Natural killer cell (primary cell): ENCODE measurements at regions of chr15 and their contacts with region 1.

Region 1: GRCh38 chr15:75842722-75843551 is at the start of gene UBE2Q2:
- DNase-seq: peak; percentile 67 to 83
- ATAC-seq: peak; percentile 69 to 81 (median 81)
- H3K4me3 ChIP-seq: peak within 1 kb of the TSS; percentile 73
- H3K4me3 Mint-ChIP-seq: peak within 1 kb of the TSS; percentile 96
- H3K27ac ChIP-seq: peak within 1 kb of the TSS; percentile 76
- H3K27ac Mint-ChIP-seq: peak within 1 kb of the TSS; percentile 74 to 88
- H3K4me1 ChIP-seq: peaks cover 29% of the 10 kb centered on the region
- H3K4me1 Mint-ChIP-seq: peaks cover 45 to 46% of the 10 kb centered on the region in 2 donors
- H3K27me3 ChIP-seq: no peaks in the 10 kb centered on the region
- H3K27me3 Mint-ChIP-seq: no peaks in the 10 kb centered on the region
- CTCF ChIP-seq: no peak
- total RNA-seq, gene UBE2Q2: 39.5 to 64.6 (median 63.9) TPM

Region 2: GRCh38 chr15:75732809-75733451 is 110.0 kb before region 1 on chr15:
- intact Hi-C with region 1: no loop called
- DNase-seq: peak; percentile 49 to 65
- ATAC-seq: peak; percentile 62 to 80 (median 80)
- H3K4me3 ChIP-seq: no peak overlapping the region
- H3K4me3 Mint-ChIP-seq: no peak overlapping the region
- H3K27ac ChIP-seq: no peak overlapping the region
- H3K27ac Mint-ChIP-seq: no peak overlapping the region
- H3K4me1 ChIP-seq: peaks cover 13% of the 10 kb centered on the region
- H3K4me1 Mint-ChIP-seq: peaks cover 4 to 22% of the 10 kb centered on the region in 2 donors
- H3K27me3 ChIP-seq: peaks cover 4% of the 10 kb centered on the region
- H3K27me3 Mint-ChIP-seq: peaks cover 24 to 66% of the 10 kb centered on the region in 2 donors
- CTCF ChIP-seq: peak; percentile 60

Region 3: GRCh38 chr15:75817138-75817935 is 25.6 kb before region 1 on chr15:
- intact Hi-C with region 1: no loop called
- DNase-seq: peak in 1 of 2 donors; percentile 16
- ATAC-seq: no peak
- H3K4me3 ChIP-seq: no peak overlapping the region
- H3K4me3 Mint-ChIP-seq: no peak overlapping the region
- H3K27ac ChIP-seq: no peak overlapping the region
- H3K27ac Mint-ChIP-seq: no peak overlapping the region
- H3K4me1 ChIP-seq: no peaks in the 10 kb centered on the region
- H3K4me1 Mint-ChIP-seq: peaks cover 0 to 6% of the 10 kb centered on the region in 2 donors
- H3K27me3 ChIP-seq: no peaks in the 10 kb centered on the region
- H3K27me3 Mint-ChIP-seq: peaks cover 0 to 6% of the 10 kb centered on the region in 2 donors
- CTCF ChIP-seq: no peak

Region 4: GRCh38 chr15:75903331-75904239 is 60.6 kb after region 1 on chr15 and contains the start of gene FBXO22:
- intact Hi-C with region 1: loop called (anchors 10 kb)
- DNase-seq: peak; percentile 85 to 93
- ATAC-seq: peak; percentile 97 to 99 (median 97)
- H3K4me3 ChIP-seq: peak within 1 kb of the TSS; percentile 62
- H3K4me3 Mint-ChIP-seq: peak within 1 kb of the TSS; percentile 93
- H3K27ac ChIP-seq: peak within 1 kb of the TSS; percentile 52
- H3K27ac Mint-ChIP-seq: peak within 1 kb of the TSS; percentile 86 to 94
- H3K4me1 ChIP-seq: peaks cover 18% of the 10 kb centered on the region
- H3K4me1 Mint-ChIP-seq: peaks cover 25 to 26% of the 10 kb centered on the region in 2 donors
- H3K27me3 ChIP-seq: no peaks in the 10 kb centered on the region
- H3K27me3 Mint-ChIP-seq: no peaks in the 10 kb centered on the region
- CTCF ChIP-seq: no peak
- total RNA-seq, gene FBXO22: 8.5 to 16.2 (median 11.8) TPM